ENCODE measurements at regions of chr15 and their contacts with region 1.

Region 1: DNA sequence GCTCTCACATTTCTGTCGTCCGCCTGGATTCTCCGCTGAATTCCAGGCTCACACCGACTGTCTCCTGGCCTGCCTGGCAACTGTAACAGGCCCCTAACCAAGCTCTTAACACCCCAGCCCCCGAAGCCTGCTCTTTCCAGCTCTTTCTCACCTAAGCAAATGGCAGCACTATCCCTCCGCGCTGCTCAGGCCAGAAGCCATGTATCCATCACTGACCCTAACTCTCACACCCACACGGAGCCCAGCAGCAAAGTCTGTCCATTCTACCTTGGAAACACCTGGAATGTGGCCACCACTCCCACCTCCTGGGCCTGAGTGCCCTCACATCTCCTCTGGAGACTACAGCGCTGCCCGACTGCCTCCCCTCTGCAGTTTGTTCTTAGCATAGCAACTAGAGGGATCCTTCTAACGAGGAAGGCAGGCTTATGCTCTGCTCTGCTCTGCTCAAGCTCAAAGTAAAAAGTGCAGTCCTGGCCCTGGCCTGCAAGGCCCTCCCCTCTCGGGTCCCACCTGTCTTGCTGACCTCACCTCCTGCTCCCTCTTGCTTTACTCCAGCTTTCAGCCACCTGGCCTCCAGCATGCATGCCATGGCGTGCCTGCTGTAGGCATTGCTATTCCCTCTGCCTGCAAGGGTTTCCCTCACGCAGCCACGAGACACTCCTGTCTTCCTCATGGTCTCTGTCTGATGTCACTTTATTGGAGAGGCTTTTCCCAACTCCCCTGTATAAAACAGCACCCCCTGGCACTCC is 27.2 kb downstream of the FEM1B start:
- DNase-seq: no peak
- ATAC-seq: no peak
- H3K4me3 Mint-ChIP-seq: no peak overlapping the region
- H3K27ac Mint-ChIP-seq: no peak overlapping the region
- H3K4me1 Mint-ChIP-seq: peaks cover 17% of the 10 kb centered on the region
- H3K27me3 Mint-ChIP-seq: peaks cover 1% of the 10 kb centered on the region
- CTCF ChIP-seq: no peak

Region 2: GRCh38 chr15:68252925-68253534 is 51.7 kb before region 1 on chr15:
- CTCF ChIA-PET with region 1: interaction called, 85 read pairs
- POLR2A ChIA-PET with region 1: no interaction called
- intact Hi-C with region 1: loop called (anchors 1 kb)
- DNase-seq: peak; percentile 66
- ATAC-seq: peak; percentile 77
- H3K4me3 Mint-ChIP-seq: no peak overlapping the region
- H3K27ac Mint-ChIP-seq: no peak overlapping the region
- H3K4me1 Mint-ChIP-seq: no peaks in the 10 kb centered on the region
- H3K27me3 Mint-ChIP-seq: peaks cover 3% of the 10 kb centered on the region
- CTCF ChIP-seq: peak; percentile 82

Region 3: GRCh38 chr15:68292157-68292781 is 12.5 kb before region 1 on chr15:
- CTCF ChIA-PET with region 1: interaction called, 42 read pairs
- POLR2A ChIA-PET with region 1: no interaction called
- intact Hi-C with region 1: no loop called
- DNase-seq: no peak
- ATAC-seq: peak; percentile 56
- H3K4me3 Mint-ChIP-seq: no peak overlapping the region
- H3K27ac Mint-ChIP-seq: peak overlapping the region; percentile 67
- H3K4me1 Mint-ChIP-seq: peaks cover 62% of the 10 kb centered on the region
- H3K27me3 Mint-ChIP-seq: no peaks in the 10 kb centered on the region
- CTCF ChIP-seq: no peak

Region 4: DNA sequence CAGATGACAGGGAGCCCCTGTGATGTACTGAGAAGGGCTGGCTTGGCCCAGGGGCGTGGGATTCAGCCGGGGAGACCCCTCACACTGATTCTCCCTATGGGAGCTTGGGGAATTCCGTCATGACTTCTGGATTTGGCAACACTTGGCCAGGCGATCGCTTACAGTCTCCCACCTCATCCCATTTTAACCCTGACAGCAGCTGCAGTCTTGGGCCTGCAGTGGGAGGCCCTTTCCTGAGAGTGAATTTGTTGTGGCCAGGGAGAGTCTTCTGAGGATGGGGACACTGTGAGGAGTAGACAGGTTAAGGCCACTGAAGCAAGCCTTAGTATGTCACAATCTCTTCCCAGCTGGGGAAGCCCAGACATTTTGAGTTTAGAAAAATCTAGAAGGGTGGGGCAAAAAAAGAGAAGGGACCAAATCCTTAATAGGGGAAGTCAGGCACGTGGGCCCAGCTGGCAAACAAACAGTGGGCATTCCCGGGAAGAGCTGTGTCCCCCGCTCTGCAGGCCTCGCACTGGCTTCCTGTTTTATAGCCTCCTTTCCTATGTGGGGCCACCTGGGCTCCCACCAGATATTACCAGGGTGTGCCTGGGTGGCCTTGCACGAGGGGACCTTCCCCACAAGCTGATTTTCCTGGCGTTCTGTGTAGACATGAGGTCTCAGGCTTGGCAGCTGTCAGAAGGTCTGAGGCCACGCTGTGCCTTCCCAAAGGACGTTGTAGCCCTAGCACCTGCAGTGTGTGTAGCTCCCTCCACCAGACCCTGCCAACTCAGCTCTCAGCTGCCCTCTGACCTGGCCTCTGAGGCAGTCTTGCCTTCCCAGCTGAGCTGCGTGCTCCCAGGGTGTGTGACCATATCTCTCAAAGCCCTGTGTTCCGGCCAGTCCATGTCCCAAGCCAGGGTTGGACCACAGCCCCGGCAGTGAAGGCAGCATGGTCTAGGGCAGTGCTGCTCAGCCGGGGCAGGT is 37.3 kb after region 1 on chr15:
- CTCF ChIA-PET with region 1: interaction called, 11 read pairs
- POLR2A ChIA-PET with region 1: no interaction called
- intact Hi-C with region 1: no loop called
- DNase-seq: no peak
- ATAC-seq: no peak
- H3K4me3 Mint-ChIP-seq: no peak overlapping the region
- H3K27ac Mint-ChIP-seq: no peak overlapping the region
- H3K4me1 Mint-ChIP-seq: no peaks in the 10 kb centered on the region
- H3K27me3 Mint-ChIP-seq: no peaks in the 10 kb centered on the region
- CTCF ChIP-seq: no peak

Region 5: DNA sequence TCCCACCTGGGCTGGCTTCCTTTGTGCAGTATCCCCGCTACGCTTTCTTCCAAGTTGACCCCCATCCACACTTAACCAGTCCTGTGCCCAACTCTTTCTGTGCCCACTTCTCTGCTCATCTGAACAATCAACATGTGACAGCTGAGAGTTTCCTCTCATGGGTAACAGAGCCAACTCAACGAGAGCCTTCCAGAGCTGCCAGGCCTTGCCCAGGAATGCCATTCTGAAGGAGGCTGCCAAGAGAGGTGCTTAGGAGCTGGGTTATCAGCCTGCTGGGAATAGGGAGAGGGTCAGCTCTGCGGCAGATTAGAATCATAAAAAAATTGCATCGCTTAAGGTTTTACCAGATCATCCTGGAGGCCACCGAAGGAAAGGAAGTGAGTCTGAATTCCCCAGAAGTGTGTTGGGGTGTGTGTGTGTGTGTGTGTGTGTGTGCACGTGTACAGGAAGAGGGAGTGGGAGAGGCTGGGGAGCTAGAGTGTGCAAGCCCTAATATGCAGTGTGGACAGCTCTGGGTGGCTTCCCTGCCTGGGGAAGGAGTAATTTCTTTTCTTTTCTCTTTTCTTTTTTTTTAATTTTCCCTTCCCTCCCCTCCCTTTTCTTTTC is 60.5 kb after region 1 on chr15:
- CTCF ChIA-PET with region 1: interaction called, 10 read pairs
- POLR2A ChIA-PET with region 1: no interaction called
- intact Hi-C with region 1: no loop called
- DNase-seq: peak; percentile 31
- ATAC-seq: peak; percentile 65
- H3K4me3 Mint-ChIP-seq: peak overlapping the region; percentile 60
- H3K27ac Mint-ChIP-seq: peak overlapping the region; percentile 64
- H3K4me1 Mint-ChIP-seq: peaks cover 9% of the 10 kb centered on the region
- H3K27me3 Mint-ChIP-seq: peaks cover 4% of the 10 kb centered on the region
- CTCF ChIP-seq: no peak

Region 6: DNA sequence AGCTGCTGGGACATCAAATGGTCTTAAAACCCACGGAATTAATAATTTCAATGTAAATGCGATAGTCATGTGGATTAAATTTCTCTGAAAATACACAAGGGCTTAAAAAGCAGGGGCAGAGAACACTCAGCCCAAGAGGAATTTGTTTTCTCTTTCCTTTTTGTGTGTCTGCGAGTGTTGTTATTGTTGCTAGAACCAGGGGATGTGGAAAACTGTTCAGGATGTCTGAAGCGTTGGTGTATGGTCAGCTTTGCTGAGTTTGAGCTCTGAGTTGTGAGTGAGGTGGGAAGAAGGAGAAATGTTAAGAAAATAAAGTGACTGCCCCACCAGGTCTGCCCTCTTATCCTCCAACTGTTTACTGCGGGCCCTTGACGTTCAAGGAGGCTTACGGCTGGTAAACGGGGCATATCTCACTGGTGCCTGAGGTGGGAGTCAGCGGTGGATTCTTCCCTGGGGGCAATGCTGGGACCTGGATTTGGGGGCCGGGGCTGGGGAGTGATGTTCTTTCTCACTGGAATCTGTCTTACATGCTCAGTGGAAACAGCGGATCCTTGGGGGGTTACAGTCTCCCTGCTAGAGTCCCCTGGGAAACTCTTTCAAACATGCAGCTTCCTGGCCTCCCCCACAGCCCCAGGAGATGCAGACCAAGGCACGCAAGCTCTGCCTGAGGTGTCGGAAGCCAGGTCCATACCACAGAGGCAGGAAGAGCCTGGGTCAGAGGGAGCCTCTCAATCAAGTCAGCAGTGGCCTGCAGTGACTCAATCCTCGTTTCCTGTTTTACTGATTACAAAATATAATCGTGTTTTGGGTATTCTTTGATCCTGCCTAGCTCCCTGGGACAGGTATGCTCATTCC is 85.4 kb after region 1 on chr15:
- CTCF ChIA-PET with region 1: interaction called, 59 read pairs
- POLR2A ChIA-PET with region 1: no interaction called
- intact Hi-C with region 1: no loop called
- DNase-seq: peak; percentile 30
- ATAC-seq: peak; percentile 73
- H3K4me3 Mint-ChIP-seq: no peak overlapping the region
- H3K27ac Mint-ChIP-seq: no peak overlapping the region
- H3K4me1 Mint-ChIP-seq: peaks cover 2% of the 10 kb centered on the region
- H3K27me3 Mint-ChIP-seq: peaks cover 25% of the 10 kb centered on the region
- CTCF ChIP-seq: no peak

Region 7: DNA sequence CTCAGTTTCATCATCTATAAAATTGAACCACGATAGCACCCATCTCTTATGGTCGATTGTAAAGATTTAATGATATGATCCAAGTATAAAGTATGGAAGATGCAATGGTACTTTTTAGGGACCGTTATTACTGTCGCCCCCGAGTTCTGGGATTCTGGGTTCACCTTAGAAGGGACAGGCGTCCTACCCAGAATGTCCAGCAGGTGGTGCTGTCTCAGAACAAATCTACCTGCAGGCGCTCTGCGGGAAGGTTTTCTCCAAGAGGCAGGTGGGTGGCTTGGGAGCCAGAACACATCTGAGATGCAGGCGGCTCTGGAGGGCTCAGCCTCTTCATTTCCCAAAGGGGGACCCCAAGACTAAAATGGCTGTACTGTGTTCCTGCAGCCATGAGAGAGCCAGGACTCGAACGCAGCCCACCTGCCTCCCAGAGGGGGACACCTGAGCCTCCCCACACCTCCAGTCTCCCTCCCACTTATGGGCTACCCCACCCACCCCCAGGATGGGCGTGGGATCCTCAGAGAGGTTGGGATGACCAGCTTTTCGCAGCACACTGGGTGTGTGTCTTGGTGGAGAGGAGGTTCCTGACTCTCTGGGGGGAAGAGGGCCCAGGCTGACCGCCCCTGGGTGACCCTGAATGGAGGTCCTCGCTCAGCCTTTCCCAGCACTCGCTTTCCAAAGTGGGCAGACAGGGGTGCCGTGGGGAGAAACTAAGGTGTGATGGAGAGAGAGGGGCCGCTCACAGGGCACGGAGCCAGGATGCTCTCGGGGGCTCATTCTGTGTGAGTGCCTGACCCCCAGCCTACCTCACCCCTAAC is 245.9 kb after region 1 on chr15:
- CTCF ChIA-PET with region 1: interaction called, 16 read pairs
- POLR2A ChIA-PET with region 1: no interaction called
- intact Hi-C with region 1: no loop called
- DNase-seq: peak; percentile 87
- ATAC-seq: peak; percentile 62
- H3K4me3 Mint-ChIP-seq: no peak overlapping the region
- H3K27ac Mint-ChIP-seq: no peak overlapping the region
- H3K4me1 Mint-ChIP-seq: peaks cover 3% of the 10 kb centered on the region
- H3K27me3 Mint-ChIP-seq: peaks cover 33% of the 10 kb centered on the region
- CTCF ChIP-seq: peak; percentile 90

Region 8: GRCh38 chr15:68566377-68566954 is 261.7 kb after region 1 on chr15:
- CTCF ChIA-PET with region 1: no interaction called
- POLR2A ChIA-PET with region 1: no interaction called
- intact Hi-C with region 1: no loop called
- DNase-seq: no peak
- ATAC-seq: no peak
- H3K4me3 Mint-ChIP-seq: no peak overlapping the region
- H3K27ac Mint-ChIP-seq: no peak overlapping the region
- H3K4me1 Mint-ChIP-seq: no peaks in the 10 kb centered on the region
- H3K27me3 Mint-ChIP-seq: peaks cover 20% of the 10 kb centered on the region
- CTCF ChIP-seq: no peak

Measured in activated CD8-positive, alpha-beta T cell treated with anti-CD3 and anti-CD28 coated beads for 36 hours (primary cell).